Heart right ventricle (tissue), 16 donors: ENCODE measurements at regions of chr17 and their contacts with region 1.

Region 1: GRCh38 chr17:38868817-38869525 is 887 bp upstream of the LASP1 start:
- DNase-seq: peak; percentile 85 to 92
- ATAC-seq: peak; percentile 72 to 87 (median 80)
- H3K4me3 ChIP-seq: peak overlapping the region; percentile 75 to 99 (median 94)
- H3K27ac ChIP-seq: peak overlapping the region; percentile 85 to 99 (median 95)
- H3K4me1 ChIP-seq: peaks cover 14 to 50% (median 41%) of the 10 kb centered on the region in 9 donors
- H3K27me3 ChIP-seq: no peaks in the 10 kb centered on the region
- CTCF ChIP-seq: peak in 4 of 9 donors; percentile 7 to 53 (median 47)

Region 2: GRCh38 chr17:38912221-38912813 is 43.3 kb after region 1 on chr17:
- intact Hi-C with region 1: loop called in 5 of 10 experiments (anchors 5 kb)
- DNase-seq: peak; percentile 67 to 74
- ATAC-seq: peak; percentile 26 to 71 (median 42)
- H3K4me3 ChIP-seq: no peak overlapping the region
- H3K27ac ChIP-seq: peak overlapping the region in 9 of 10 donors; percentile 18 to 68 (median 45)
- H3K4me1 ChIP-seq: peaks cover 27 to 74% (median 49%) of the 10 kb centered on the region in 9 donors
- H3K27me3 ChIP-seq: no peaks in the 10 kb centered on the region
- CTCF ChIP-seq: no peak

Region 3: DNA sequence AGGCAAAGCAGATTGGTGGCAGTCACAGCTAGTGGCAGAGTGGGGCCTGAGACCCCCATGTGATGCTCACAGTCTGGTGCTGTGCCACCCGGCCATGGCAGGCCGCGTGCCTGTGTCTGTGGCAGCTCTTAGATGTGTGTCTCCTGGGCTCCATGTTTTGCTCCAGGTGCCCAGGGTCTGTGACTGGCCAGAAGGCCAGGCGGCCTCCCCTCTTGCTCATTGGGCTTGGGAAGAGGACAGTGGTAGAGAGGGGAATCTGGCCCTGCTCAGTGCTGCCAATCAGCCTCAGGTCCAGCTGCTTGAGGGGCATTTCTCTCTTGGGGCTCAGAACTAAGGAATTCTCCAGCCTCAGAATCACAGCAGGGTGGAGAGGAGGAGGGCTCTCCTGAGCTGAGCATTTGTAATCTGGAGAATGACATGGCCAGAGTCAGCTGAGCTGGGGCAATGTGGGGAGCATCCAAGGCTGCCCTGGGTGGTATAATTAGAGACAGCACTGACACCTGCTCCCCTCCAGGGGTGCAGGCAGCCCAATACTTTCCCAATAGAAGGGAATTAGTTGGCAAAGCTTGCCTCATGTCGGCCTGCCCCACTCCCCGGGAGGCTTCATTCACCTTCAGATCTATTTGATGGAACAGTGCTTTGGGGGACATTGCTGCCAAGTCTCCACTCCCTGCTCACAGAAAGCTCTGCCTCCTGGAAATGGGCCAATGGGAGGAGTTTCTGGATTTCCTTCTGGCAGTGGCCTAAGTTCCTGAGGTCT is 53.7 kb after region 1 on chr17:
- intact Hi-C with region 1: loop called in 1 of 10 experiments (anchors 5 kb)
- DNase-seq: peak; percentile 34 to 91
- ATAC-seq: peak; percentile 36 to 67 (median 55)
- H3K4me3 ChIP-seq: no peak overlapping the region
- H3K27ac ChIP-seq: peak overlapping the region; percentile 1 to 78 (median 50)
- H3K4me1 ChIP-seq: peaks cover 13 to 77% (median 54%) of the 10 kb centered on the region in 9 donors
- H3K27me3 ChIP-seq: no peaks in the 10 kb centered on the region
- CTCF ChIP-seq: peak in 3 of 9 donors; percentile 8 to 24 (median 17)

Region 4: GRCh38 chr17:38967290-38967738 is 98.3 kb after region 1 on chr17 and contains the start of gene FBXO47:
- intact Hi-C with region 1: loop called in 3 of 10 experiments (anchors 2 to 10 kb)
- DNase-seq: peak; percentile 92 to 97
- ATAC-seq: peak; percentile 97 to 100 (median 99)
- H3K4me3 ChIP-seq: peak within 1 kb of the TSS in 9 of 10 donors; percentile 4 to 52 (median 35)
- H3K27ac ChIP-seq: peak within 1 kb of the TSS; percentile 12 to 87 (median 72)
- H3K4me1 ChIP-seq: peaks cover 0 to 11% (median 0%) of the 10 kb centered on the region in 9 donors
- H3K27me3 ChIP-seq: no peaks in the 10 kb centered on the region
- CTCF ChIP-seq: peak in 6 of 9 donors; percentile 20 to 59 (median 36)
- total RNA-seq, gene FBXO47: not detected